Ascending aorta (tissue), 2 donors: ENCODE measurements at regions of chr7 and their contacts with region 1.

Region 1: DNA sequence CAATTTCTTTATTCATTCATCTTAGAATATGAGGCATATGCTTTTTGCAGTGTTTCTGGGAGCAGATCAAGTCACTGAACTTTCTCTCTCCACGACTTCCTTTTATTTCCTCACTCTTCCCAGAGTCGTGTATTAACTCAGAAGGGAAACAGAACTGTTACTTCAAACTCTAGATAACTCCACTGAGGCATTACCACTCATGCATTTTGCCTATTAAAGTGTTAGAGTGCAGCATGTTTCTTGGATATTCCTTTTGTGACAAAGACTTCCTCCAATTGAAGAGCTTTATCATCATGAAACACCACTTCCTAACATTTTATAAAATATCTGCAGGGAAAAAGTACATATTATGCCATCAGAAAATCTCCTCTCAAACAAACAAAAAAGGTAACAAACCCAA is 797.4 kb upstream of the COBL start:
- DNase-seq: no peak
- H3K4me3 ChIP-seq: no peak overlapping the region
- H3K27ac ChIP-seq: no peak overlapping the region
- H3K4me1 ChIP-seq: no peaks in the 10 kb centered on the region
- H3K27me3 ChIP-seq: no peaks in the 10 kb centered on the region
- CTCF ChIP-seq: no peak

Region 2: DNA sequence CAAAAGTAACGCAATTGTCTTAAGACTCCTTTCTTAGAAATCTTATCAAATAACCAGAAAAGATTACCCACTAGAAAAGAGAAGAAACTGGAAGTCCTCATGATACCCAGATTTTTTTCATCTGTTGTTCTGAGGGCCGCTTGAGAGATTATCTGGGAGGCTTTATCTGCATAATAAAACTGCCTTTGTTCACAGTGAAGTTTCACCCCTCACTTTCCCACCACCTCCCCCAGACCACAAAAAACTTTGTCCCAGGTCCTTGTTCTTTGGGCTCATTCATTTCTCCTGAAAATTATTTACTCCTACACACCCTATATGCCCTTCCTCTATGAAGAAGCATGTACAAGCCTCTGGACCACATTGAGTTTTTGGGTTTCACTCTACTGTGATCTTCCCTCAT is 52.4 kb before region 1 on chr7:
- intact Hi-C with region 1: loop called (anchors 5 kb)
- DNase-seq: no peak
- H3K4me3 ChIP-seq: no peak overlapping the region
- H3K27ac ChIP-seq: no peak overlapping the region
- H3K4me1 ChIP-seq: no peaks in the 10 kb centered on the region
- H3K27me3 ChIP-seq: no peaks in the 10 kb centered on the region
- CTCF ChIP-seq: no peak

Region 3: GRCh38 chr7:52257890-52258289 is 143.8 kb after region 1 on chr7:
- intact Hi-C with region 1: no loop called
- DNase-seq: no peak
- H3K4me3 ChIP-seq: no peak overlapping the region
- H3K27ac ChIP-seq: no peak overlapping the region
- H3K4me1 ChIP-seq: no peaks in the 10 kb centered on the region
- H3K27me3 ChIP-seq: no peaks in the 10 kb centered on the region
- CTCF ChIP-seq: no peak